ENCODE measurements at regions of chr19 and their contacts with region 1.

Region 1: DNA sequence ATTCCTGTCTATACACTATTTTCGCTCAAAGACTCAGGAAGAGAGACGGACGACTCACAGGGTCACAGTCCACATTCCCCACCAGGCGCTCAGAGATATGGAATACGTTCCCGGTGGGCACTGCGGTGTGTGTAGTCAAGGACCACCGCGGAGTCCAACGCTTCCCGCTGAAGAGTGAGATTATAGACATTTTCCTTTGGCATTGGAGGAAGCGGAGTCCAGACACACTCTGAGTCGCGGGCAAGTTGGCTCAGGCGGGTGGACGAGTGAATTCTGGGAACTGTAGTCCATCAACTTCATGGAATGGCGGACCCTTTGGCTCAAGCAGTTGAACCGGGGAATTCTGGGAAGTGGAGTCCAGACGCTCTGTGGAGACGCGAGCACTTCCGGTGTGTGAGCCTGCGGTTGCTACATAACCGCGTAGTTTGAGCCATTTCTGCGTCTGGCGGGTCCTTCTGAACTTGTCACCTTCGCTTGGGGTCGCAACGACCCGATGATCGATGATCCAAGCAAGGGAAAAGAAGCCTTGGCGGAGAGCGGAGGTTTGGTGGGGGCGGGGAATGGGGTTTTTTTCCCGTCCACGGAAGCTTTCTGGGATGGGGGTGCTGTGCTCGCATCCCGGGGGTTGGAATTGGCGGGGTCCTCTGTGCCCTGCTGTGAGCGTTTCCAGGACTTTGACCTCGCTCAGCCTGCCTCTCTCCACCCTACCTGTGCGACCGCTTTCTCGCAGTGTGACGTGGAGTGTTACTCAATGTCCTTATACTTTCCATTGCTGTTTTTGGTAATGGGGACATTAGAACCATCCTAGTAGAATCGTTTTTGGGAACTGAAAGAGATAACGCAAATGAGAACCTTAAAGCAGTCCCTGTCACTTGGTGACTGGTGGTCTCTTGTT is at the start of gene ZNF230:
- DNase-seq: peak; percentile 64 to 96 (median 82)
- ATAC-seq: peak; percentile 96
- H3K4me3 ChIP-seq: peak within 1 kb of the TSS; percentile 91 to 92
- H3K4me3 Mint-ChIP-seq: peak within 1 kb of the TSS; percentile 99
- H3K27ac ChIP-seq: peak within 1 kb of the TSS; percentile 59 to 81
- H3K27ac Mint-ChIP-seq: peak within 1 kb of the TSS; percentile 98
- H3K4me1 ChIP-seq: peaks cover 12% of the 10 kb centered on the region
- H3K4me1 Mint-ChIP-seq: peaks cover 23% of the 10 kb centered on the region
- H3K27me3 ChIP-seq: no peaks in the 10 kb centered on the region
- H3K27me3 Mint-ChIP-seq: no peaks in the 10 kb centered on the region
- CTCF ChIP-seq: no peak
- total RNA-seq, gene ZNF230: 2.4 to 3.8 TPM

Region 2: DNA sequence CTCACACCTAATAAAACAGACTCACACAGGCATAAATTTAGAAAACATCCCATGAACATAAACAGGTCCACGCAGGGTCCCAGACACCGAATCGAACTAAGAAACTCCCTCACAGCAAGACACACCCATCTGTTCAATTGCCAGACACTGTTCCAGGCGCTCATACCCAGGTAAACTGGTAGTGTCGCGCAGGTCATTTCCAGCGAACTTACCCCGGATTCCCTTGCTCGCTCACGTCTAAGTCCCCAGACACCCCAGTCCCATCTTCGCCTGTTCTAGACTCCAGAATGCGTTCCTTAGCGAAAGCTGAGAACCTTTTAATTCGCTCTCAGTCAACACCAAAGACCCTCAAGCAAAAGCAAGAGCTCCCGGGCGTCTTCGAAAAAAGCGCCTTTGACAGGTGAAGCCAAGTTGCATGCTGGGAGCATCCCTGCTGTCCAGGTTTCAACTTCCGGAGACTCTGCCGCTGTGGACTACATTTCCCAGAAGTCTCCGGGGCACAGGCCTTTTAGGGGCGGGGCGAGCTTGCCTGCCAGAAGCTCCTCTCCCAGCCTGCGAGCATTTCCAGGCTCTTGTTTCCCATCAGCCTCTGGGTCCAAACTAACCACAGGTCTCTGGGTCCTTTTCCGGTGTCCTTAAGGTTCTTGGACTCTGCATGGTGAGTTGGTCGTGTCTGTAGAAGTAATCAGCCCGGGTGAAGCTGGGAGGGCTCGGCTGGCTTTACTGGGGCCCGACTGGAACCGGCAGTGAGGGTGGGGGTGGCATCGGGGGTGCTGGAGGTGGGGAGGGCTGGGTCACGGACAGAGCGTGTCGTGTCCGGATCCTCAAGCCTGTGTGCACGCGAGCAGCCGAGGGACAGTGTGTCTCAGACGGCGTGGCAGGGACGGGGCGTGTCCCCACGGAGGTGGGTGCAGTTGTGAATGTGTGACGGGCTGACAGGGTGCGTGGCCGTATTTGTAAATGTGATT is 175.7 kb before region 1 on chr19 and contains the start of gene ZNF283:
- CTCF ChIA-PET with region 1: no interaction called
- POLR2A ChIA-PET with region 1: no interaction called
- intact Hi-C with region 1: loop called (anchors 1 kb)
- DNase-seq: peak; percentile 64 to 90 (median 81)
- ATAC-seq: peak; percentile 92
- H3K4me3 ChIP-seq: peak within 1 kb of the TSS; percentile 52 to 69
- H3K4me3 Mint-ChIP-seq: peak within 1 kb of the TSS; percentile 88
- H3K27ac ChIP-seq: no peak within 1 kb of the TSS
- H3K27ac Mint-ChIP-seq: peak within 1 kb of the TSS; percentile 39
- H3K4me1 ChIP-seq: peaks cover 12% of the 10 kb centered on the region
- H3K4me1 Mint-ChIP-seq: peaks cover 22% of the 10 kb centered on the region
- H3K27me3 ChIP-seq: no peaks in the 10 kb centered on the region
- H3K27me3 Mint-ChIP-seq: peaks cover 8% of the 10 kb centered on the region
- CTCF ChIP-seq: no peak
- total RNA-seq, gene ZNF283: 1.3 to 1.4 TPM

Region 3: GRCh38 chr19:43983912-43984686 is 18.7 kb before region 1 on chr19 and contains the start of gene ZNF155:
- CTCF ChIA-PET with region 1: no interaction called
- POLR2A ChIA-PET with region 1: no interaction called
- intact Hi-C with region 1: loop called (anchors 1 kb)
- DNase-seq: peak; percentile 28 to 89 (median 64)
- ATAC-seq: peak; percentile 86
- H3K4me3 ChIP-seq: peak within 1 kb of the TSS; percentile 76 to 92
- H3K4me3 Mint-ChIP-seq: peak within 1 kb of the TSS; percentile 96
- H3K27ac ChIP-seq: peak within 1 kb of the TSS; percentile 61 to 65
- H3K27ac Mint-ChIP-seq: peak within 1 kb of the TSS; percentile 92
- H3K4me1 ChIP-seq: no peaks in the 10 kb centered on the region
- H3K4me1 Mint-ChIP-seq: peaks cover 15% of the 10 kb centered on the region
- H3K27me3 ChIP-seq: no peaks in the 10 kb centered on the region
- H3K27me3 Mint-ChIP-seq: no peaks in the 10 kb centered on the region
- CTCF ChIP-seq: no peak
- total RNA-seq, gene ZNF155: 3.4 to 3.5 TPM

Region 4: DNA sequence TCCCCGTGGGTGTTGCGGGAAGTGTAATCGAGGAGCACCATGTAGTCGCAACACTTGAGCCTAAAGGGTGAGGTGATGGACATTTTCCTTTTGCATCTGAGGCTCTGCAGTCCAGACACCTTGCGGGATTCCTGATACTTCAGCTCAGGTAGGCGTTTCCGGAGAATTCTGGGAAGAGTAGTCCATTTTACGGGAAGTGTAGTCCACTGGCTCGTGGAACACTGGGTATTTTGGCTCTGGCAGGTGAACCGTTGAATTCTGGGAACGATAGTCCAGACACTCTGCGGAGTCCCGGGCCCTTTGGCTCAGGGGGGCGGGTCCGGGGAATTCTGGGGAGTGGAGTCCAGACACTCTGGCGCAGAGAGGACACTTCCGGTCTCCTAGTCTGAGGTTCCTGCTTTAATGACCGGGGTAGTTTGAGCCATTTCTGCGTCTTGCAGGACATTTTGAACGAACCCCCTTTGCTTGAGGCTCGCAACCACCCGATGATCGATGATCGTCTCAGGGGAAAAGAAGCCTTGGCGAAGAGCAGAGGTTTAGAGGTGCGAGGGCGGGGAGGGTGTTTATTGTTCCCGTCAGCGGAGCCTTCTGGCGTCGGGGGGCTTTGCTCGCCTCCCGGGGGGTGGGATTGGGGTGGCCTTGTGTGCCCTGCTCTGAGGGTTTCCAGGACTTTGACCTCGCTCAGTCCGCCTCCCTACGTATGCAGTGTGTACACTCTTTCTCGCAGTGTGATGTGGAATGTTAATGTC is 49.0 kb after region 1 on chr19 and contains the start of gene ZNF223:
- CTCF ChIA-PET with region 1: no interaction called
- POLR2A ChIA-PET with region 1: no interaction called
- intact Hi-C with region 1: loop called in 1 of 2 experiments (anchors 2 kb)
- DNase-seq: peak; percentile 9 to 85 (median 68)
- ATAC-seq: peak; percentile 84
- H3K4me3 ChIP-seq: peak within 1 kb of the TSS; percentile 71 to 77
- H3K4me3 Mint-ChIP-seq: peak within 1 kb of the TSS; percentile 93
- H3K27ac ChIP-seq: peak within 1 kb of the TSS in 1 of 2 experiments; percentile 40
- H3K27ac Mint-ChIP-seq: peak within 1 kb of the TSS; percentile 85
- H3K4me1 ChIP-seq: peaks cover 11% of the 10 kb centered on the region
- H3K4me1 Mint-ChIP-seq: peaks cover 38% of the 10 kb centered on the region
- H3K27me3 ChIP-seq: no peaks in the 10 kb centered on the region
- H3K27me3 Mint-ChIP-seq: no peaks in the 10 kb centered on the region
- CTCF ChIP-seq: no peak
- total RNA-seq, gene ZNF223: 0.72 to 1.3 TPM

Region 5: GRCh38 chr19:44113138-44113783 is 110.4 kb after region 1 on chr19 and contains the start of gene ZNF225:
- CTCF ChIA-PET with region 1: no interaction called
- POLR2A ChIA-PET with region 1: no interaction called
- intact Hi-C with region 1: loop called (anchors 1 kb)
- DNase-seq: peak; percentile 64 to 95 (median 83)
- ATAC-seq: peak; percentile 97
- H3K4me3 ChIP-seq: peak within 1 kb of the TSS; percentile 80 to 92
- H3K4me3 Mint-ChIP-seq: peak within 1 kb of the TSS; percentile 99
- H3K27ac ChIP-seq: peak within 1 kb of the TSS; percentile 40 to 64
- H3K27ac Mint-ChIP-seq: peak within 1 kb of the TSS; percentile 93
- H3K4me1 ChIP-seq: peaks cover 14% of the 10 kb centered on the region
- H3K4me1 Mint-ChIP-seq: peaks cover 34% of the 10 kb centered on the region
- H3K27me3 ChIP-seq: no peaks in the 10 kb centered on the region
- H3K27me3 Mint-ChIP-seq: no peaks in the 10 kb centered on the region
- CTCF ChIP-seq: no peak
- total RNA-seq, gene ZNF225: 1.3 to 1.6 TPM

Region 6: GRCh38 chr19:44304659-44305193 is 301.9 kb after region 1 on chr19 and contains the start of gene ZNF235:
- CTCF ChIA-PET with region 1: no interaction called
- POLR2A ChIA-PET with region 1: no interaction called
- intact Hi-C with region 1: loop called in 1 of 2 experiments (anchors 10 kb)
- DNase-seq: peak; percentile 22 to 89 (median 70)
- ATAC-seq: peak; percentile 96
- H3K4me3 ChIP-seq: peak within 1 kb of the TSS; percentile 75 to 77
- H3K4me3 Mint-ChIP-seq: peak within 1 kb of the TSS; percentile 94
- H3K27ac ChIP-seq: peak within 1 kb of the TSS; percentile 26 to 52
- H3K27ac Mint-ChIP-seq: peak within 1 kb of the TSS; percentile 85
- H3K4me1 ChIP-seq: peaks cover 15% of the 10 kb centered on the region
- H3K4me1 Mint-ChIP-seq: peaks cover 35% of the 10 kb centered on the region
- H3K27me3 ChIP-seq: no peaks in the 10 kb centered on the region
- H3K27me3 Mint-ChIP-seq: peaks cover 7% of the 10 kb centered on the region
- CTCF ChIP-seq: no peak
- total RNA-seq, gene ZNF235: 2.6 to 3.7 TPM

Measured in CD8-positive, alpha-beta T cell (primary cell).